HCT116 (cell line): ENCODE measurements at regions of chr12 and their contacts with region 1.

Region 1: DNA sequence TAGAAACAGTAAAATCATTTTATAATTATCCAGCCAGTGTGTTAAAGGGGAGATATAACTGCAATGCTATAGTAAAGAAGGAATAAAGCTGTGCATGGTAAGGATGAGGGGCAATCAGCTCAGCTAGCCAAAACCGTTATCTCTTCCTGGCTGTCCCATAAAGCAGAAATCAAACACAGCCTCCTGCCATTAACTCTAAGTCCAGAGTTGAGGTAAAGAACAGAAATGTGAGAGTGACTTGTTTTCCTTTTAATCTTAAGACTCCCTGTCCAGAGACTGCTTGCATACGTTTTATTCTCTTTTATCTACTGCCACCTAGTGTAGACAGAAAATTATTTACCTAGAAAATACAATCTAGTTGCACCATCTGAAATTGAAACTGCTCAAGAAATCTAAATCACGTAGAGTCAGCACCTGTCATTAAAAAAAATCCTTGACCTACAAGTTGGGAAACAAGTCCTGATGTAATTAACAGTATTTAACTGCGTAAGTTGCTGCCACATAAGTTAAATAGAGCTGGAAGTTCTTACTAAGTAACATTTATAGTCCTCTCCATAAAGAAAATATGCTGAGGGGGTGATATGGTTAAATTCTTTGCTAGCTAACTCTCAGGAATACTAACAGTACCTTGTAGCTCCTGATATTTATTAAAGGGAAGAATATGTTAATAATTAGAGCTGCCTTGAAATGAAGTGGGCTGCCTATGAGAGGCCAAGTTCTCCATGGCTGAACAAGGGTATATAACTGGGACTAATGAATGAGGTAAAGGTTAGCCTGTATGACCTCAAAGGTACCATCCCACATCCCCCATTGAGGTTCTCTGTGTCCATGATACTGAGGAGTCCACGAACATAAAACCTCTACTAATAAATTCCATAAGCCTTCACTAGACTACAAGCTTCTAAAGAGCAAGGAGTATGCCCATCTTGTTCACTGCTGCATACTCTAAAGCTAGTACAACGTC is 62.7 kb downstream of the GALNT4 start:
- DNase-seq: peak; percentile 57
- ATAC-seq: peak; percentile 87
- H3K4me3 ChIP-seq: no peak overlapping the region
- H3K27ac ChIP-seq: no peak overlapping the region
- H3K4me1 ChIP-seq: peaks cover 0 to 3% of the 10 kb centered on the region in 2 experiments; a peak in 1 of 4 replicates
- H3K27me3 ChIP-seq: no peaks in the 10 kb centered on the region
- CTCF ChIP-seq: peak; percentile 25 to 77 (median 66); a peak in 5 of 6 replicates
- POLR2A ChIP-seq: no peak
- RAD21 ChIP-seq: peak; percentile 91

Region 2: GRCh38 chr12:88111074-88111652 is 1350.8 kb before region 1 on chr12:
- CTCF ChIA-PET with region 1: no interaction called
- POLR2A ChIA-PET with region 1: no interaction called
- RAD21 ChIA-PET with region 1: no interaction called
- intact Hi-C with region 1: loop called (anchors 5 kb)
- DNase-seq: peak; percentile 38
- ATAC-seq: no peak
- H3K4me3 ChIP-seq: no peak overlapping the region
- H3K27ac ChIP-seq: no peak overlapping the region; the same call in 1 of the 2 replicates
- H3K4me1 ChIP-seq: 0 out of 4 replicates have a peak, but pooled peaks cover 0 to 3% of the 10 kb centered on the region in 2 experiments
- H3K27me3 ChIP-seq: no peaks in the 10 kb centered on the region
- CTCF ChIP-seq: peak; percentile 31 to 57 (median 35); a peak in 4 of 6 replicates
- POLR2A ChIP-seq: no peak
- RAD21 ChIP-seq: peak; percentile 82

Region 3: GRCh38 chr12:89019408-89020120 is 442.4 kb before region 1 on chr12:
- CTCF ChIA-PET with region 1: interaction called, 47 read pairs
- POLR2A ChIA-PET with region 1: no interaction called
- RAD21 ChIA-PET with region 1: interaction called in 1 of 2 experiments, 3 read pairs
- intact Hi-C with region 1: loop called (anchors 1 kb)
- DNase-seq: peak; percentile 83
- ATAC-seq: peak; percentile 90
- H3K4me3 ChIP-seq: peak overlapping the region; percentile 15 to 40
- H3K27ac ChIP-seq: no peak overlapping the region
- H3K4me1 ChIP-seq: peaks cover 2 to 30% of the 10 kb centered on the region in 2 experiments; a peak in 3 of 4 replicates
- H3K27me3 ChIP-seq: no peaks in the 10 kb centered on the region
- CTCF ChIP-seq: peak; percentile 72 to 88 (median 82)
- POLR2A ChIP-seq: no peak
- RAD21 ChIP-seq: peak; percentile 95

Region 4: GRCh38 chr12:89051065-89051677 is 410.8 kb before region 1 on chr12:
- CTCF ChIA-PET with region 1: no interaction called
- POLR2A ChIA-PET with region 1: no interaction called
- RAD21 ChIA-PET with region 1: no interaction called
- intact Hi-C with region 1: loop called (anchors 1 kb)
- DNase-seq: peak; percentile 70
- ATAC-seq: peak; percentile 85
- H3K4me3 ChIP-seq: no peak overlapping the region
- H3K27ac ChIP-seq: no peak overlapping the region
- H3K4me1 ChIP-seq: no peaks in the 10 kb centered on the region
- H3K27me3 ChIP-seq: no peaks in the 10 kb centered on the region
- CTCF ChIP-seq: peak; percentile 86 to 95 (median 92)
- POLR2A ChIP-seq: no peak
- RAD21 ChIP-seq: peak; percentile 97